Left colon (tissue), 2 donors: ENCODE measurements at regions of chr16 and their contacts with region 1.

Region 1: GRCh38 chr16:24041826-24042631 is 206.2 kb downstream of the PRKCB start:
- DNase-seq: peak; percentile 32 to 73
- ATAC-seq: peak; percentile 56

Region 2: DNA sequence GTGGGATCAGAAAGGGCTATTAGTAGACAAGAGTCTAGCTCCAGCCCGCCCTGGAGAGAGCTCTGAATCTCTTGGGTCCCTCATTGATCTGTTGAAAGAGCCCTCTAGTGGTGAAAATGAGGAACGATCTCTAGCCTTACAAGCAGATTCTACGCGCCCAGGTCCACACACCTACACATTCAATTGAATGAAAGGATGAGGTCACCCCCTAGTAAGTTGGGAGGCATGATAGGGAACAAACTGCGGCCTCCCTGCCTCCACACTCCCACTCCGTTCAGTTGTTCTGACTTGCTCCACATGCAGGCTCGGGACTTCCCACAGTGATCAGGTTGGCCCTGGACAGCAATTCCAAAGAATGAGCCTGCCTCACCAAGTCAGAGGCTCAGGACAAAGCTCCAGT is 211.2 kb after region 1 on chr16:
- intact Hi-C with region 1: loop called in 1 of 2 experiments (anchors 10 kb)
- DNase-seq: peak in 1 of 2 donors; percentile 26
- ATAC-seq: peak; percentile 55

Region 3: DNA sequence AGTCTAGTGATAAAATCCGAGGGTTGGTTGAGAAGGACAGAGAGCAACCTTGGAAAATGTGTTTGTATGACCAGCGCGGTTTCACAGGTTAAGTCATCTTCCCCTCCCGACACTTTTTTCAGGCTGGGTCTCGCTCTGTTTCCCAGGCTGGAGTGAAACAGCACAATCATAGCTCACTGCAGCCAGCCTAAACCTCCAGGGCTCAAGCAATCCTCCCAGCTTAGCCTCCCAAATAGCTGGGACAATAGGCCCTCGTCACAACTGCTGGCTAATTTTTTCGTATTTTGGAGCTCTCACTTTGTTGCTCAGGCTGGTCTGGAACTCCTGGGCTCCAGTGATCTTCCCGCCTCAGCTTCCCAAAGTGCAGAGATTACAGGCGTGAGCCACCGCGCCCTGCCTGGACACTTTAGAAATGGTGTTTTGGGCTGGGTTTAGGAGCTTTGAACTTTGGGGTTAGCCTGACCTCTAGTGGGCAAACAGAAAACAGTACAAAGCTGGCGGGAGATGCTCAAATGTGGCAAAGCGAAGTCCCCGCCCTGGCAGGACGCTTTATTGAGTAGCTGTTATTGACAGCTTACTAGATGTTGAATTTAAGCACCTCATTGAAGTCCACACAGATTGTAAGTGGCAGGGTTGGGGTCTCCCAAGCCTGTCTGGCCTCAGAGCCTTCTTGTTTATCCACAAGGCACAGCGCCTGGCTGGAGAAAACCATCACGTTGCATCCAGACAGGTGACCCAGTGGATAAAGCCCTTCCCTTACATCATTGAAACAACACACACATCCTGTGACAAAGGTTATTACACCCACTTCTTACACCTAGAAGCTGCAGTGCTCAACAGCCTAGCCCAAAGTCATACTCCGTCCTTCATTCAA is 462.7 kb after region 1 on chr16:
- intact Hi-C with region 1: loop called in 1 of 2 experiments (anchors 5 kb)
- DNase-seq: peak; percentile 23 to 37
- ATAC-seq: peak; percentile 82